ENCODE measurements at regions of chr2 and their contacts with region 1.

Region 1: GRCh38 chr2:202278944-202279343 is 13.4 kb downstream of the NOP58 start:
- DNase-seq: no peak
- ATAC-seq: no peak
- H3K4me3 Mint-ChIP-seq: no peak overlapping the region
- H3K27ac Mint-ChIP-seq: peak overlapping the region; percentile 61
- H3K4me1 Mint-ChIP-seq: peaks cover 41% of the 10 kb centered on the region
- H3K27me3 Mint-ChIP-seq: no peaks in the 10 kb centered on the region
- CTCF ChIP-seq: no peak

Region 2: DNA sequence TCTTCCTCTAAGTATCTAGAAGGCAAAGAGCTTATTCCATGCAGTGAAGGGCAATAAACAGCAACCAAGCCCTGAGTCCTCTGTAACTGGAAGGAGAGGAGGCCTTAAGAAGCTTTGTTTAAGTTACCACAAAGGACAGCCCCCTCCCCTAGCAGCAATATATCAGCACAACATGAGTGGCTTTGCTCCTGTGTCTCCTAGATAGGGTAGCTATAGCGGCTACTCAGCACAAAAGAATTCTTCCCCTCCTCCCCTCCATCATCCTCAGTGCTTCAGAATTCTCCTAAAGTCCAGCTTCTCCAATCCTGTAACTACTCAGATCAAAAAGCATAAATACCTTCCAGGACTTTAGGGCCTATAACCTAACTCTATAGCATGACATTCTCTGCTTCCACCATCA is 57.1 kb before region 1 on chr2:
- CTCF ChIA-PET with region 1: no interaction called
- POLR2A ChIA-PET with region 1: no interaction called
- intact Hi-C with region 1: no loop called
- DNase-seq: no peak
- ATAC-seq: no peak
- H3K4me3 Mint-ChIP-seq: no peak overlapping the region
- H3K27ac Mint-ChIP-seq: peak overlapping the region; percentile 39
- H3K4me1 Mint-ChIP-seq: peaks cover 23% of the 10 kb centered on the region
- H3K27me3 Mint-ChIP-seq: no peaks in the 10 kb centered on the region
- CTCF ChIP-seq: no peak

Region 3: DNA sequence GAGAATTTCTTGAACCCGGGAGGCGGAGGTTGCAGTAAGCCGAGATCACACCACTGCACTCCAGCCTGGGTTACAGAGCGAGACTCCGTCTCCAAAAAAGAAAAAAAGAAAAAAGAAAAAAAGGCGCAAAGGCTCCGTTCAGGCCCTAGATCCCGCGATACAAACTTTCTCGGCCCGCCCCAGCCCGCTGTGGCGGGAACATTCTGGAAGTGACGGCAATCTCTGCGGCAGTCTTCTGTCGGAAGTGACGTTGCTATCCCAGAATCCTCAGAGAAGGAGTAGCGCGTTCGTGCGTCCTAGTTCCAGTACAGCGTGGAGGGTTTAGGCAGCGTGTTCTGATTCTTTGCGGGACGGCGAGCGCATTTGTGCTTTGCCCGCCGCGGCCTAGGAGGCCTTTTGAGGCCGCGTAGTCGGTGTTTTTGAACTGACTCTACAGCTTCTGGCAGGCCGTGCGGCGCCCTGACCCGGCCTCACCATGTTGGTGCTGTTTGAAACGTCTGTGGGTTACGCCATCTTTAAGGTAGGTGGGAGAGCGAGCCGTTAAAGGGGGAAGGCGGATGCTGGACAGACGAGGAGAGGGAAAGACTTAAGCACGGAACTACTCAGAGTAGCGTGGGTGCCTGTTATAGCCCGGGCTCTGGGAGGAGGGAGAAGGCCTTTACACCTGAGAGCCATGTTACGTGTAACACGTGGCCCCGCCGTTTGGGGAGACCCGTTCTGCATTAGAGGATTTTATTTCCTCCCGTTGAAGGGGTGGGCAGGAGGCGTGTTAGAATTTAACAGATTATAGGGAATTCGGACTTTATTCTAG is 13.3 kb before region 1 on chr2 and contains the start of gene NOP58:
- CTCF ChIA-PET with region 1: interaction called, 5 read pairs
- POLR2A ChIA-PET with region 1: interaction called, 234 read pairs
- intact Hi-C with region 1: no loop called
- DNase-seq: peak; percentile 95
- ATAC-seq: peak; percentile 86
- H3K4me3 Mint-ChIP-seq: peak within 1 kb of the TSS; percentile 53
- H3K27ac Mint-ChIP-seq: peak within 1 kb of the TSS; percentile 75
- H3K4me1 Mint-ChIP-seq: peaks cover 15% of the 10 kb centered on the region
- H3K27me3 Mint-ChIP-seq: no peaks in the 10 kb centered on the region
- CTCF ChIP-seq: no peak
- total RNA-seq, gene NOP58: 161 to 170 TPM

Region 4: GRCh38 chr2:202290970-202291369 is 12.0 kb after region 1 on chr2:
- CTCF ChIA-PET with region 1: interaction called, 3 read pairs
- POLR2A ChIA-PET with region 1: interaction called, 234 read pairs
- intact Hi-C with region 1: no loop called
- DNase-seq: no peak
- ATAC-seq: no peak
- H3K4me3 Mint-ChIP-seq: no peak overlapping the region
- H3K27ac Mint-ChIP-seq: peak overlapping the region; percentile 25
- H3K4me1 Mint-ChIP-seq: peaks cover 26% of the 10 kb centered on the region
- H3K27me3 Mint-ChIP-seq: no peaks in the 10 kb centered on the region
- CTCF ChIP-seq: no peak

Region 5: GRCh38 chr2:202299712-202300111 is 20.8 kb after region 1 on chr2:
- CTCF ChIA-PET with region 1: interaction called, 4 read pairs
- POLR2A ChIA-PET with region 1: interaction called, 49 read pairs
- intact Hi-C with region 1: no loop called
- DNase-seq: no peak
- ATAC-seq: peak; percentile 79
- H3K4me3 Mint-ChIP-seq: no peak overlapping the region
- H3K27ac Mint-ChIP-seq: peak overlapping the region; percentile 82
- H3K4me1 Mint-ChIP-seq: peaks cover 41% of the 10 kb centered on the region
- H3K27me3 Mint-ChIP-seq: no peaks in the 10 kb centered on the region
- CTCF ChIP-seq: no peak

Measured in activated CD8-positive, alpha-beta T cell treated with anti-CD3 and anti-CD28 coated beads for 36 hours (primary cell).